Activated CD4-positive, alpha-beta T cell treated with anti-CD3 and anti-CD28 coated beads for 36 hours (primary cell): ENCODE measurements at regions of chr22 and their contacts with region 1.

Region 1: DNA sequence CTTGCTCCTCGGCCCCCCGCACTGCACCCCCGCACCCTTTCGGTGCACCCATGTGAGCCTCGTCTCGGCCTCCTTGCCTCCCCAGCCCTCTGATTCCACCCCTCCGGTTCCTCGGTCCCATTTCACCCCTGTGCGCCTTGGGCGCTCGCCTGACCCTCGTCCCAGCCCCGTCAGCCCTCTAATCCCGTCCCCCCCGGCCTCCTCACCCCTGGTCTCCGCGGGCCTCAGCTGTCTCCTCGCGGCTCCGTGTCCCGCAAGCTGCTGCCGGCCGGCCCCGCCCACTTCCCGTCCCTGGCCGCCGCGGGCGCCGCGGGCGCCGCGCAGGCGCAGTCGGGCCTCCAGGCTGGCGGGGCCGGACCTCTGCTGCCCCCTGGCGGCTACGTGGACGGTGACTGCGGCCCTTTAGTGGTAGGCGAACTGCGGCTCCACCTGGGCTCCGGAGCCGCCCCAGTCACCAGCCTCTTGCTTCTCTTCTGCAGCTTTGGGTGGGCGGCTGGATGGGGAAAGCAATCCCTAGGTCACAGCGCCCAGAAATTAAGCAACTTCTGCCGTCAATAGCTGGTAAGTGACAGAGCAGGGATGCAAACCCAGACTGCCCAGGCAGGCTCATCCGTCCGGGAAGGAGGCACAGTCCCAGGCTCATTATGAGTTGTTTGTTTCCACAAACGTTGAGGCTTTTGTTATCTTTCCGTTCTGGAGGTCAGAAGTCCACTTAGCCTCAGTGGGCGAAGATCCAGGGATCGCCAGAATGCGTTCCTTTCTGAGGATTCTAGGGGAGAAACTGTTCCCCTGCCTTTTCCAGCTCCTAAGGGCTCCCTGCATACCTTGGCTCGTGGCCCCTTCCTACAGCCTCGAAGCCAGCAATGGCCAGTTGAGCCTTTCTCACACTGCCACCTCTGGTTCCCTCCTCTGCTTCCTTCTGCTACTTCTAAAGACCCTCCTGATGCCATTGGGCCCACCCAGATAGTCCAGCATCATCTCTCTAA is at the start of gene PPM1F:
- DNase-seq: peak; percentile 95
- ATAC-seq: peak; percentile 91
- H3K4me3 Mint-ChIP-seq: peak within 1 kb of the TSS; percentile 78
- H3K27ac Mint-ChIP-seq: peak within 1 kb of the TSS; percentile 70
- H3K4me1 Mint-ChIP-seq: peaks cover 11% of the 10 kb centered on the region
- H3K27me3 Mint-ChIP-seq: no peaks in the 10 kb centered on the region
- total RNA-seq, gene PPM1F: 23.6 to 27.7 TPM

Region 2: GRCh38 chr22:21666786-21667185 is 286.1 kb before region 1 on chr22:
- CTCF ChIA-PET with region 1: interaction called, 3 read pairs
- POLR2A ChIA-PET with region 1: no interaction called
- intact Hi-C with region 1: loop called in 1 of 2 experiments (anchors 2 kb)
- DNase-seq: no peak
- ATAC-seq: no peak
- H3K4me3 Mint-ChIP-seq: peak overlapping the region; percentile 93
- H3K27ac Mint-ChIP-seq: peak overlapping the region; percentile 96
- H3K4me1 Mint-ChIP-seq: peaks cover 27% of the 10 kb centered on the region
- H3K27me3 Mint-ChIP-seq: no peaks in the 10 kb centered on the region

Region 3: DNA sequence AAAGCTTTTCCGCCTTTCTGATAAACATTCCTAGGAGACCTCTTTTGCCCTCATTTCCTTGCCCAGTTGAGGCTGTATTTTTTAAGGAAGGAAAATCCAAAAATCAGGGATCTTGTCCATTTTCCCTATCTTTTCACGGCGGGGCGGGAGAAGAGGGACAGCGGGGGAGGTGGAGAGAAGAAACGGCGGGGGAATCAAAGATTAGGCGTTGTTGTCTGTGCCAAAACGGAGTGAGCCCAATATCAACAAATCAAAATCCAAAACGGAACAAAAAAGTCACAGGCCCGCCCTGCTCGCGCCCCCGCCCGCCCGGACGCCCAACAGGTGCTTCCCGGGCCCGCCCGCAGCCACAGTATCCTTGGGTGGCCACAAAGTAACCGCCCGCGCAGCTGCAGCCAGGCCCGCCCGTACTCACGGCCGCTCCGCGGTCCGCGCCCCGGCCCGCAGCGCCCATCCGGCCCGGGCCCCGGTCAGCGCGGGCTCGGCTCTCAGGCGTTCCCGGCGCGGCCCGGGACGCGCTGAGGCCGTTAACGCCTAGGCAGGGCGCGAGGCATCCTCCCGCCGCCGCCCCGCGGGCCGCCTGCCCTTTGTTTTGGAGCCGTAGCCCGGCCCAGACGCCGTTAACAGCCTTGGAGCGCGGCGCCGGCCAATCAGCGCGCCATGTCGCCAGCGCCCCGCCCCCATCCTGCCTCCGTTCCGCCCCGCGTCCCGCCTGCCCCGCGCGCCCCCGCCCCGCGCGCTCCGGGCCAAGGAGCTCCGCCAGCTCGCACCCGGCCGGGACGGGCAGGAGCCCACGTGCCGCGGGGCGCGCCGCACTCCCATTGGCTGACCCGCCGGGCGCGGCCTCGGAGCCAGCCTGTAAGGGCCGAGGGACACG is 217.4 kb before region 1 on chr22 and contains the start of gene YPEL1:
- CTCF ChIA-PET with region 1: no interaction called
- POLR2A ChIA-PET with region 1: no interaction called
- intact Hi-C with region 1: loop called in 1 of 2 experiments (anchors 2 kb)
- DNase-seq: peak; percentile 96
- ATAC-seq: peak; percentile 95
- H3K4me3 Mint-ChIP-seq: peak within 1 kb of the TSS; percentile 84
- H3K27ac Mint-ChIP-seq: peak within 1 kb of the TSS; percentile 79
- H3K4me1 Mint-ChIP-seq: peaks cover 10% of the 10 kb centered on the region
- H3K27me3 Mint-ChIP-seq: peaks cover 3% of the 10 kb centered on the region
- total RNA-seq, gene YPEL1: 1.0 to 1.5 TPM

Region 4: DNA sequence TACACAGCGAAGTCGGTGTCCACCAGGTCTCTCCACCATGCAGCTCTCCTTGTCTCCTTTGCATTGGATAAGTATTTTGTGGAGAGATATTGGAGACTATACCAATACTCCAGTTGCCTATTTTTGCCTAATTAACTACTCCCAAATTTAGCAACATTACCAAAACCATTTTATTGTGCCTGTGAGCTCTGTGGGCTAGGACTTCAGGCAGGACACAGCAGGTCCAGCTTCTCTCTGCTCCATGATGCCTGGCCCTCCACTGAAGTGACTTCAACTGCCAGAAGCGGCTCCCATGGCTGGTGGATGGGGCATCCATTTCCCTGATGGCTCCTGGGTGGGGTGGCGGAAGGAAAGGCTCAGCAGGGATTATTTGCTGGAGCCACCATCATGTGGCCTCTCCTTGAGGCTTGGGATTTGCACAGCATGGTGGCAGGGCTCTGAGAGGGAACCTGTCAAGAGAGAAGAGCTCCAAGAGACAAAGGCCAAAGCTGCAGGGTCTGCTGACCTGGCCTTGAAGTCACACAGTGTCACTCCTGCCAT is 48.6 kb before region 1 on chr22:
- CTCF ChIA-PET with region 1: no interaction called
- POLR2A ChIA-PET with region 1: no interaction called
- intact Hi-C with region 1: no loop called
- DNase-seq: no peak
- ATAC-seq: no peak
- H3K4me3 Mint-ChIP-seq: no peak overlapping the region
- H3K27ac Mint-ChIP-seq: no peak overlapping the region
- H3K4me1 Mint-ChIP-seq: no peaks in the 10 kb centered on the region
- H3K27me3 Mint-ChIP-seq: peaks cover 4% of the 10 kb centered on the region

Region 5: DNA sequence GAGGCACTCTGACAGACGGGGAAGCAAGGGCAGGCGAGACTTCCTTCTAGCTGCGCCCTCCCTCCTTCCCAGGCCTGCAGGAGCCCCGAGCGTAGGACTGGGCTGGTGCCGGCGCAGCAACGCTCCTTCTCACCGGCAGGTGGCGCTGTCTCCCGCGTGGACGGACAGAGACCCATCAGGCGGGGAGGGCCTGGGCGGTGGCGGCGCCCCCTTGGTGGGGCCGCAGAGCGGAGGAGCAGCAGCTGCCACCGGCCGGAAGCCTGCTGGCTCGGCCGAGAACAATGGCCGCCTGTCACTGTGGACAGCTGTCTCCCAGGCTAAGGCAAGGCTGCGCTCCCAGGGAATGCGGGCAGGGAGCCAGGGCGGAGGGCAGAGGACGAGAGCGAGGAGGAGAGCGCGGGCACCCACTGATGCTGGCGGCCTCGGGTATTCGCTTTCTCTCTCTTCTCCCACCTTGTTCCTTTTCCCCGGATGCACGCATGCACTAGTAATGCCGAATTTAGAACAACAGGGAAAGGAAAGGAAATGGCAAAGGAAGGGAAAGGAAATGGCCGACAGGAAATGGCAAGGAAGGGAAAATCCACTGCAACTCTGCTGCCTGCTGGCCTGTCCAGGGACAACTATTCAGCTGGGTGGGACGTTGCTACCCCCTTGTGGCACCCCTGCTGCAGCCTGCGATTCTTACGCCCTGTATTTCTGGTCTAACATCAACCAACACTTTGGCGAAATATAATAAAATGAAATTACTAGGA is 14.6 kb before region 1 on chr22:
- CTCF ChIA-PET with region 1: interaction called, 57 read pairs
- POLR2A ChIA-PET with region 1: no interaction called
- intact Hi-C with region 1: loop called (anchors 2 kb)
- DNase-seq: peak; percentile 95
- ATAC-seq: peak; percentile 95
- H3K4me3 Mint-ChIP-seq: peak overlapping the region; percentile 67
- H3K27ac Mint-ChIP-seq: peak overlapping the region; percentile 79
- H3K4me1 Mint-ChIP-seq: peaks cover 43% of the 10 kb centered on the region
- H3K27me3 Mint-ChIP-seq: no peaks in the 10 kb centered on the region

Region 6: GRCh38 chr22:22110548-22111266 is 157.8 kb after region 1 on chr22:
- CTCF ChIA-PET with region 1: no interaction called
- POLR2A ChIA-PET with region 1: no interaction called
- intact Hi-C with region 1: no loop called
- DNase-seq: peak; percentile 71
- ATAC-seq: peak; percentile 84
- H3K4me3 Mint-ChIP-seq: no peak overlapping the region
- H3K27ac Mint-ChIP-seq: no peak overlapping the region
- H3K4me1 Mint-ChIP-seq: peaks cover 15% of the 10 kb centered on the region
- H3K27me3 Mint-ChIP-seq: no peaks in the 10 kb centered on the region

Region 7: GRCh38 chr22:22244316-22245250 is 291.7 kb after region 1 on chr22 and contains the start of gene VPREB1:
- CTCF ChIA-PET with region 1: no interaction called
- POLR2A ChIA-PET with region 1: no interaction called
- intact Hi-C with region 1: no loop called
- DNase-seq: no peak
- ATAC-seq: no peak
- H3K4me3 Mint-ChIP-seq: no peak within 1 kb of the TSS
- H3K27ac Mint-ChIP-seq: no peak within 1 kb of the TSS
- H3K4me1 Mint-ChIP-seq: peaks cover 16% of the 10 kb centered on the region
- H3K27me3 Mint-ChIP-seq: peaks cover 9% of the 10 kb centered on the region
- total RNA-seq, gene VPREB1: not detected